CD14-positive monocyte (primary cell): ENCODE measurements at regions of chr10 and their contacts with region 1.

Region 1: DNA sequence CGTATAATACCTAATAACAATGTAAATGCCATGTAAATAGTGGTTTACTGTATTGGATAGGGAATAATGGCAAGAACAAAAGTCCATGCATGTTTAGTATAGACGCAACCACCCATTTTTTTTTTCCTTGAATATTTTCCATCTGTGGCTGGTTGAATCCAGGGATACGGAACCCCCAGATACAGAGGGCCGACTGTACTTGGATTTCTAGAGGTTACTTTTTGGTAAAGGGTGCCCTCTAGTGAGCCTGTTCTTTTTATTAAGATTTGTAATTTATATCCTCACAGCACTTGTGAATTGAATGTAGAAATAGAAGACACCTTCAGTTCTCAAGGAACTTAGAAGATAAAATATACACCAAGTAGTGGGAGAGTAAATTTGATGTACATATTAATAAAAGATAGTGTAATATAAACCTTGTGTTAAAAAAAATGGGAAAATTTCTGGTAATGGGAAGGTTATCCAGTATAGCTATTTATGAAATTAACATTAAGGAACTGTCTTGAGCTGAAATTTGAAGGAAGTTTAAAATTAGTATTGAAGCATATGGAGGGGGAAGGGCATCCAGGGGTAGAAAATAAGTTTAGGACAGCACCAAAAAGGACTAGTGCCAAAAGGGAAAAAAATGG is 32.0 kb downstream of the EXOC6 start:
- DNase-seq: peak; percentile 20 to 56 (median 40)
- H3K4me3 ChIP-seq: no peak overlapping the region
- H3K4me3 Mint-ChIP-seq: no peak overlapping the region
- H3K27ac ChIP-seq: no peak overlapping the region
- H3K27ac Mint-ChIP-seq: no peak overlapping the region
- H3K4me1 ChIP-seq: peaks cover 10 to 14% of the 10 kb centered on the region in 2 donors
- H3K4me1 Mint-ChIP-seq: peaks cover 33% of the 10 kb centered on the region
- H3K27me3 ChIP-seq: no peaks in the 10 kb centered on the region
- H3K27me3 Mint-ChIP-seq: no peaks in the 10 kb centered on the region
- CTCF ChIP-seq: peak; percentile 72

Region 2: DNA sequence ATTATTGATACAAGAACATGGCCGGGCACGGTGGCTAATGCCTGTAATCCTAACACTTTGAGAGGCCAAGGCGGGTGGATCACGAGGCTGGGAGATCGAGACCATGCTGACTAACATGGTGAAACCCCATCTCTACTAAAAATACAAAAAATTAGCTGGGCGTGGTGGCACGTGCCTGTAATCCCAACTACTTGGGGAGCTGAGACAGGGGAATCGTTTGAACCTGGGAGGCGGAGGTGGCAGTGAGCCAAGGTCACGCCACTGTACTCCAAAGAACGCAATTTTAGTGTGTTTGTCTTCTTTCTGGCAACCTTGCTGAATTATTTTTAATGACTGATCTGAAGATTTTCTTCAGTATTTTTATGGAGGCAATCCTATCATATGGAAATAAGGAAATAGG is 352.6 kb before region 1 on chr10:
- intact Hi-C with region 1: loop called in 1 of 2 experiments (anchors 10 kb)
- DNase-seq: no peak
- H3K4me3 ChIP-seq: no peak overlapping the region
- H3K4me3 Mint-ChIP-seq: no peak overlapping the region
- H3K27ac ChIP-seq: no peak overlapping the region
- H3K27ac Mint-ChIP-seq: no peak overlapping the region
- H3K4me1 ChIP-seq: no peaks in the 10 kb centered on the region
- H3K4me1 Mint-ChIP-seq: peaks cover 1% of the 10 kb centered on the region
- H3K27me3 ChIP-seq: no peaks in the 10 kb centered on the region
- H3K27me3 Mint-ChIP-seq: no peaks in the 10 kb centered on the region
- CTCF ChIP-seq: no peak

Region 3: DNA sequence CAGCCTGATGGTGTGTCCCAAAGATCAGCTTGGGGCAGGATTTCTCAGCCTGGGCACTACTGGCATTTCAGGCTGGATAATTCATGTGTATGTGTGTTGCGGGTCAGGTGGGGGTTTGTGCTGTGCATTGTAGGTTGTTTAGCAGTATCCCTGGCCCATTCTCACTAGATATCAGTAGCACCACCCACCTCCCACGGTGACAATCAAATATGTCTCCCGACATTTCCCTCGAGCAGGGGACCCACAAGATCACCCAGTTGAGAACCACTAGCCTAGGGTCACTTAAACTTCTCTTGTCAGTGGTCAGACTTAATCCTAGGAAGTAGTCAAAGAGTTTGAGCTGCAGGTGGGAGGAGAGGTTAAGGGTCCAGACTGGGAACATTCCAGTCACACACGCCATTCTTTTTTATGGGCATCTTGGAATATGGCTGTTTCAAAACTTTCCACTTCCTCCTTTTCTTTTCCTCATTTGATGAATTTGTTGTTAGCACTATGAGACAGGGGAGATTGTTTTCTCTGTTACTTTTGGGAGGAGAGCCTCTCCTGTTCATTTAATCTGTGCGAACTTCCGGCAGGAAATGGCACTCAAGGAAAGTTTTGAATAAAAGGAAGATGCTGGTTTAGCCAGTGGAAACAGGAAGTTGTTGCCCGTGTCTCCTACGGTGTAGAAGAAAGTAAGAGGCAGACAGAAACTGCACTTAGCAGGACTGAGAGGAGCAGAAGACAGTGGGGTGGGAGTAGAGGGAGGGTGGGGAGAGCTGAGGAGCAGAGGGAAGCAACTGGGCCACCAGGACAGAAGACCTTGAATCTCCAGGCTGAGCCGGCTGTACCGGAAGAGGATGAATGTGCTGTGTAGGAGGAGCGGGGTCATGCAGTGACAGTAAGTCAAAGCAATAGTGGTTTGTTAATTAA is 49.6 kb before region 1 on chr10:
- intact Hi-C with region 1: no loop called
- DNase-seq: peak; percentile 26 to 48 (median 41)
- H3K4me3 ChIP-seq: peak overlapping the region; percentile 26 to 71 (median 65)
- H3K4me3 Mint-ChIP-seq: peak overlapping the region; percentile 85 to 96
- H3K27ac ChIP-seq: peak overlapping the region in 1 of 2 donors; percentile 64
- H3K27ac Mint-ChIP-seq: peak overlapping the region; percentile 56 to 92 (median 77)
- H3K4me1 ChIP-seq: peaks cover 11 to 20% of the 10 kb centered on the region in 2 donors
- H3K4me1 Mint-ChIP-seq: peaks cover 31% of the 10 kb centered on the region
- H3K27me3 ChIP-seq: no peaks in the 10 kb centered on the region
- H3K27me3 Mint-ChIP-seq: peaks cover 2 to 6% (median 3%) of the 10 kb centered on the region in 3 donors
- CTCF ChIP-seq: no peak

Region 4: GRCh38 chr10:92942284-92942683 is 61.9 kb after region 1 on chr10:
- intact Hi-C with region 1: no loop called
- DNase-seq: no peak
- H3K4me3 ChIP-seq: no peak overlapping the region
- H3K4me3 Mint-ChIP-seq: no peak overlapping the region
- H3K27ac ChIP-seq: no peak overlapping the region
- H3K27ac Mint-ChIP-seq: no peak overlapping the region
- H3K4me1 ChIP-seq: no peaks in the 10 kb centered on the region
- H3K4me1 Mint-ChIP-seq: no peaks in the 10 kb centered on the region
- H3K27me3 ChIP-seq: no peaks in the 10 kb centered on the region
- H3K27me3 Mint-ChIP-seq: no peaks in the 10 kb centered on the region
- CTCF ChIP-seq: no peak

Region 5: GRCh38 chr10:93080350-93081046 is 200.2 kb after region 1 on chr10:
- intact Hi-C with region 1: no loop called
- DNase-seq: peak; percentile 32 to 47 (median 46)
- H3K4me3 ChIP-seq: no peak overlapping the region
- H3K4me3 Mint-ChIP-seq: peak overlapping the region in 1 of 2 donors; percentile 67
- H3K27ac ChIP-seq: no peak overlapping the region
- H3K27ac Mint-ChIP-seq: no peak overlapping the region
- H3K4me1 ChIP-seq: peaks cover 0 to 3% of the 10 kb centered on the region in 2 donors
- H3K4me1 Mint-ChIP-seq: peaks cover 6% of the 10 kb centered on the region
- H3K27me3 ChIP-seq: peaks cover 31 to 40% of the 10 kb centered on the region in 2 donors
- H3K27me3 Mint-ChIP-seq: peaks cover 32 to 58% (median 54%) of the 10 kb centered on the region in 3 donors
- CTCF ChIP-seq: peak; percentile 96